ENCODE measurements at regions of chr6 and their contacts with region 1.

Region 1: GRCh38 chr6:65113581-65113980 is 593.4 kb downstream of the EYS start:
- DNase-seq: no peak
- H3K4me3 ChIP-seq: no peak overlapping the region
- H3K27ac ChIP-seq: no peak overlapping the region
- H3K4me1 ChIP-seq: no peaks in the 10 kb centered on the region
- H3K27me3 ChIP-seq: no peaks in the 10 kb centered on the region
- CTCF ChIP-seq: no peak
- POLR2A ChIP-seq: no peak

Region 2: DNA sequence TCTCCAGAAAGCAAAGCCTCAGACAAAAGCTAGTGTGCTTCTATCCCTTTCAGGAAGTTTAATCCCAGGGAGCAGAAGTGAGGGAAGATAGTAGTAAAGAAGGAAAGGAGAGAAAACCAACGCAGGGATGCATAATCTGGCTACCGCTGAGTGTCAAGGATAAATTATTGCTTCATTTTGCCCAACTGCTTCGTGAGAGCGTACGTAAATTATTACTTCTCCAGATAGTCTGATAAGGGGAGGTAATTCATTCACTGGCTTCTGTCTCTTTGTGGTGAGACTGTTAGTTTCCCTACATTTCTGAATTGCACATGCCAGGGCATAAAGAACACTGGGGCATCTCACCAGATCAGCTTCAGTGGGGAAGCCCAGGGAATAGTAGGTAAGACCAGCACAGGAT is 938.3 kb before region 1 on chr6:
- intact Hi-C with region 1: no loop called
- DNase-seq: no peak
- H3K4me3 ChIP-seq: no peak overlapping the region
- H3K27ac ChIP-seq: no peak overlapping the region
- H3K4me1 ChIP-seq: no peaks in the 10 kb centered on the region
- H3K27me3 ChIP-seq: no peaks in the 10 kb centered on the region
- CTCF ChIP-seq: no peak
- POLR2A ChIP-seq: no peak

Region 3: GRCh38 chr6:65064844-65065243 is 48.7 kb before region 1 on chr6:
- intact Hi-C with region 1: no loop called
- DNase-seq: no peak
- H3K4me3 ChIP-seq: no peak overlapping the region
- H3K27ac ChIP-seq: no peak overlapping the region
- H3K4me1 ChIP-seq: no peaks in the 10 kb centered on the region
- H3K27me3 ChIP-seq: no peaks in the 10 kb centered on the region
- CTCF ChIP-seq: no peak
- POLR2A ChIP-seq: no peak

Region 4: GRCh38 chr6:65851785-65852184 is 738.2 kb after region 1 on chr6:
- intact Hi-C with region 1: loop called (anchors 10 kb)
- DNase-seq: no peak
- H3K4me3 ChIP-seq: no peak overlapping the region
- H3K27ac ChIP-seq: no peak overlapping the region
- H3K4me1 ChIP-seq: no peaks in the 10 kb centered on the region
- H3K27me3 ChIP-seq: no peaks in the 10 kb centered on the region
- CTCF ChIP-seq: no peak
- POLR2A ChIP-seq: no peak

Measured in breast epithelium (tissue), 4 donors.